ENCODE measurements at regions of chr14 and their contacts with region 1.

Region 1: GRCh38 chr14:90053044-90053443 is 8.8 kb upstream of the KCNK13 start:
- DNase-seq: peak; percentile 61
- ATAC-seq: peak; percentile 89
- H3K4me3 ChIP-seq: peak overlapping the region; percentile 36; the same call in 1 of the 2 replicates
- H3K27ac ChIP-seq: peak overlapping the region; percentile 63
- H3K4me1 ChIP-seq: peaks cover 16% of the 10 kb centered on the region
- H3K27me3 ChIP-seq: no peaks in the 10 kb centered on the region
- CTCF ChIP-seq: no peak

Region 2: DNA sequence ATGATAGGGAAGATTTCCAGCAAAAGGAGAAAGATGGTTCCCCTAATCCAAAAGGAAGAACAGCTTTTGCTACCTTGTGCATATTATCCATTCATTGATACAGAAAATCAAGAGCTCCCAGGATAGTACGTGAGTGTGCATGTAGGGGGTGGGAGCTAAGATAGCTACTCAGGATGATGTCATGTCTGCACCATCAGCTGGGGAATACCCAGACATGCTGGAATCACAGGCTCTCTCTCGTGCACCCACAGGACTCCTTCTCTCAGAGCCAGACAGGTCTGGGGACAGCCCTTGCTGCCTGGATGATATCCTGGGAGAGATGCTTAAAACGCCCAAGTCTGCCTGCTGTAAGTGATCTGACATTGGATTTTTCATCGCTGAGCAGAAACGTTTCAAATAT is 674.9 kb before region 1 on chr14:
- CTCF ChIA-PET with region 1: no interaction called
- POLR2A ChIA-PET with region 1: no interaction called
- intact Hi-C with region 1: no loop called
- DNase-seq: no peak
- ATAC-seq: no peak
- H3K4me3 ChIP-seq: no peak overlapping the region
- H3K27ac ChIP-seq: no peak overlapping the region
- H3K4me1 ChIP-seq: no peaks in the 10 kb centered on the region
- H3K27me3 ChIP-seq: no peaks in the 10 kb centered on the region
- CTCF ChIP-seq: no peak

Region 3: GRCh38 chr14:89826596-89826995 is 226.4 kb before region 1 on chr14:
- CTCF ChIA-PET with region 1: no interaction called
- POLR2A ChIA-PET with region 1: no interaction called
- intact Hi-C with region 1: no loop called
- DNase-seq: peak; percentile 30
- ATAC-seq: no peak
- H3K4me3 ChIP-seq: no peak overlapping the region
- H3K27ac ChIP-seq: no peak overlapping the region
- H3K4me1 ChIP-seq: no peaks in the 10 kb centered on the region
- H3K27me3 ChIP-seq: no peaks in the 10 kb centered on the region
- CTCF ChIP-seq: no peak

Region 4: GRCh38 chr14:90023176-90023896 is 29.7 kb before region 1 on chr14:
- CTCF ChIA-PET with region 1: no interaction called
- POLR2A ChIA-PET with region 1: no interaction called
- intact Hi-C with region 1: loop called (anchors 2 kb)
- DNase-seq: peak; percentile 73
- ATAC-seq: peak; percentile 85
- H3K4me3 ChIP-seq: no peak overlapping the region
- H3K27ac ChIP-seq: peak overlapping the region; percentile 75
- H3K4me1 ChIP-seq: peaks cover 21% of the 10 kb centered on the region
- H3K27me3 ChIP-seq: no peaks in the 10 kb centered on the region
- CTCF ChIP-seq: no peak

Region 5: DNA sequence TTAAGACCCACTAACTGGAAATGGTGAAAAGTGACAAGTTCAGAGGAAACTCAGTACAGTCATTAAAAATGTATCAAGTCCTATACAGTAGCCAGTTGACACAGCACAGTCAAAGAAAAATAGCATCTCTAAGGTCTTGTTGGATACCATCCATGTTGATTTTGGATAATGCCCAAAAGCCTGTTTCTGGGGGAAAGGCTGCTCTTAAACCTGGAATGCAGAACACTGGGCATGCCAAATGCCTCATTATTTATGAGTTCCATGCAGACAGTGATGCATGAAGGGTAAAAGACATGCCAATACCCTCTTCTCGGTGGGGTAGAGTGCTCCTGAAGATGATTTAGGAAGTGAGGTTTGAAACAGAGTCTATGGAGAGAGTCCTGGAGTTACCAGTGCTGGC is 38.3 kb after region 1 on chr14:
- CTCF ChIA-PET with region 1: no interaction called
- POLR2A ChIA-PET with region 1: no interaction called
- intact Hi-C with region 1: loop called (anchors 5 kb)
- DNase-seq: peak; percentile 93
- ATAC-seq: peak; percentile 74
- H3K4me3 ChIP-seq: no peak overlapping the region
- H3K27ac ChIP-seq: 0 out of 2 replicates have a peak overlapping the region, but pooled peaks have one; percentile 13
- H3K4me1 ChIP-seq: peaks cover 24% of the 10 kb centered on the region
- H3K27me3 ChIP-seq: no peaks in the 10 kb centered on the region
- CTCF ChIP-seq: no peak

Measured in PC-3 (cell line).